Psoas muscle (tissue), 8 donors: ENCODE measurements at regions of chr1 and their contacts with region 1.

Region 1: DNA sequence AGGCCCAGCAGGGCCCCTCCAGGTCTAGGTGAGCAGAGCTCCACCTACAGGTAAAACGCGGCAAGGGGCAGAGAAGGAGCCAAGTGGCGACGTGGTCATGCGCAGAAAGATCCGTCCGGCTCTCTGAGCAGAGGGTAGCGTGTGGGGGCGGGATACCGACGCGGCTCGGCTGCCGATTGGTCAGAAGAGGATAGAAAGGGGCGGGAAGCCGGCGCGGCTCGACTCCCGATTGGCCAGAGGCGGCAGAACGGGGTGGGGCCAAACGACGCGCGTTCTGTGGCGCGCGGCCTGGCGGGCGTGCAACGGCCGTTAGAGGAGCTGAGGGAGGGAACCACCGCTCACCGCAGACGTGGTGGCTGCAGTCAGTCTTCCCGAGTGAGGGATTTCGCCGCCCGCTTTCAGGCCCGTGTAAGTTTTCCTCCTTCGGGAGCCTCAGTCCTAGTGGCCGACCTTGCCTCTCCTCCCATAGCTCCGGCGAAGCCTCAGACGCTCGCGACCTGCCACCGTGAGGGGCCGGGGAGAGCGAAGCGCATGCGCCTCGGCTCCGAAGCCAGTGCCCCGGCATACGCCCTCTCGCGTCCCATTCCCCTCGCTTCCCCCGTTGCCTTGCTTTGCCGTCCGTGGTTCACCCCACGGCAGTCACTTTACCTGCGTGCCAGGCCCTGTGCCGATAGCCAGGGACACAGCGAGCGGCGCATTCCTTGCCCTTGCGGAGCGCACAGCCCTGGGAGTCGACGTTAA is at the start of gene CEP85:
- DNase-seq: peak; percentile 97 to 99
- ATAC-seq: peak; percentile 94 to 99 (median 97)
- H3K4me3 ChIP-seq: peak within 1 kb of the TSS; percentile 74
- H3K27ac ChIP-seq: peak within 1 kb of the TSS; percentile 89
- H3K4me1 ChIP-seq: peaks cover 20% of the 10 kb centered on the region
- H3K27me3 ChIP-seq: no peaks in the 10 kb centered on the region
- CTCF ChIP-seq: peak; percentile 81
- total RNA-seq, gene CEP85: 16.0 to 52.5 (median 41.1) TPM

Region 2: DNA sequence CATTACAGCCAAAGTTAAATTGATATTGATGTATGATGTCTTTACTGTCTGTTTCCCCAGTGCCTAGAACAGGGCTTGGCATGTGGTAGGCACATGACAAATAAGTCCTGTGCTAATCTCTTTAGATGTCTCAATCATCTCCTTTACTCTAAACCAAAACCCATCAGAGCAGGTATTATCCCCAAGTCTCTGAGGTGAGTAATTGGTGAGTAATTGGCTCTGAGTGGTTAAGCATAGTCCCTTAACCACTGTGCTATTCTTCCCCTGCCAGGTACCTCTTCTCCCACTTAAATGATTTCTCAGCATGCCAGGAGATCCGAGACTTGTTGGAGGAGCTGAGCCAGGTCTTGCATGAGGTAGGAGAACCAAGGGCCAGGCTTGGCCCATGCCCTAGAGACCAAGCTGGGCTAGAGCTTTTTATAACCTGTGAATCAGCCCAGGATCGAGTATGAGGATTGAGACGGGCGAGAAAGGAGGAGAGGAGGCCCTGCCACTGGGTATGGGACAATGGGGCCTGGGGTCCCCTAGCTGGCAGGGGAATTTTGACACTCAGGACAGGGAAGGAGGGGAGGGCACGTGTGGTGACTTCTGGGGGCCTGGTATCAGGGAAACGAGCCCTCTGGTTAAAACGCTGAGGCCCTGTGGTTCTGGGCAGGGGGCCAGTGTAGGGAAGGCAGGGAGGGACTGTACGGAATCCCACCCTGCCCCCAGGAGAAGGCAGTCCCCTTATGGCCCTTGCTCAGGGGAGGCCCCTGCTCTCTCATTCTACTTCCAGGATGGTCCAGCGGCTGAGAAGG is 52.3 kb before region 1 on chr1:
- intact Hi-C with region 1: loop called in 1 of 2 experiments (anchors 5 kb)
- DNase-seq: peak; percentile 53 to 86
- ATAC-seq: peak; percentile 92 to 94 (median 93)
- H3K4me3 ChIP-seq: peak overlapping the region; percentile 68
- H3K27ac ChIP-seq: peak overlapping the region; percentile 99
- H3K4me1 ChIP-seq: peaks cover 11% of the 10 kb centered on the region
- H3K27me3 ChIP-seq: no peaks in the 10 kb centered on the region
- CTCF ChIP-seq: no peak

Region 3: GRCh38 chr1:26275580-26276431 is 41.7 kb after region 1 on chr1:
- intact Hi-C with region 1: loop called in 1 of 2 experiments (anchors 5 kb)
- DNase-seq: peak; percentile 80 to 86
- ATAC-seq: peak; percentile 72 to 79 (median 76)
- H3K4me3 ChIP-seq: peak overlapping the region; percentile 32
- H3K27ac ChIP-seq: peak overlapping the region; percentile 92
- H3K4me1 ChIP-seq: peaks cover 64% of the 10 kb centered on the region
- H3K27me3 ChIP-seq: no peaks in the 10 kb centered on the region
- CTCF ChIP-seq: peak; percentile 66